ENCODE measurements at regions of chr12 and their contacts with region 1.

Region 1: GRCh38 chr12:103548622-103549601 is 38.2 kb upstream of the STAB2 start:
- DNase-seq: peak; percentile 55
- H3K4me3 ChIP-seq: peak overlapping the region in 1 of 2 experiments; percentile 36; a peak in 1 of 4 replicates
- H3K27ac ChIP-seq: no peak overlapping the region
- H3K4me1 ChIP-seq: no peaks in the 10 kb centered on the region; a peak in 1 of 4 replicates
- H3K27me3 ChIP-seq: no peaks in the 10 kb centered on the region
- CTCF ChIP-seq: peak; percentile 97
- EP300 ChIP-seq: no peak
- RAD21 ChIP-seq: peak; percentile 97

Region 2: DNA sequence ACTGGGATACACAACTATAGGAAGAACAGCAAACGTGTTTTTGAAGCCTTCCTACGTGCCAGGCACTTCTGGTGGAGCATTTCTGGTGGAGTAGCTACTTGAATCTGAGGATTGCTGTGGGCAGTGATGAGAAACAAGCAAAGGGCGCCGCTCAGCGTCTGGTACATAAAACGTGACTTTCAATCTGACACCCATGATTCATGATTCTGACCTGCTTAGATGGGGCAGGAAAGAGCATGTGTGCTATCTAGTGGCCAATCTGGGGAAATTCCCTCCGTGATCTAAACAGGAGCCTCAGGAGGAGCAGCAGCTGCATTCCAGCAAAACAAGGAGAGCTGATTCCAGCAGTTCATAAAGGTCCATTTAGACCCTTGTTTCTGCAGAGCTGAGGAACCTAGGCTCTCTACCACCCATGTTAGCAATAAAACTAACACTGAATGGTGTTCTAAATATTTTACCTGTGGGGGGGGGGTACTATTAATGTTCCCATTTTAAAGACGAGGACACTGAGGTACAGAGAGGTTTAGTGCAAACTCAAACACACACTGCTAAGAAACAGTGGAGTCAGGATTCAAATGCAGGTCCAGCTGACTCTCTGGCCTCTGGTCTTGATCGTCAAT is 669.7 kb before region 1 on chr12:
- CTCF ChIA-PET with region 1: interaction called, 116 read pairs
- POLR2A ChIA-PET with region 1: no interaction called
- DNase-seq: peak; percentile 23
- H3K4me3 ChIP-seq: peak overlapping the region in 1 of 2 experiments; percentile 47; a peak in 2 of 4 replicates
- H3K27ac ChIP-seq: no peak overlapping the region
- H3K4me1 ChIP-seq: peaks cover 0 to 2% of the 10 kb centered on the region in 2 experiments; a peak in 1 of 4 replicates
- H3K27me3 ChIP-seq: no peaks in the 10 kb centered on the region
- CTCF ChIP-seq: peak; percentile 62
- EP300 ChIP-seq: no peak
- RAD21 ChIP-seq: peak; percentile 59

Region 3: GRCh38 chr12:103326190-103326589 is 222.7 kb before region 1 on chr12:
- CTCF ChIA-PET with region 1: interaction called, 10 read pairs
- POLR2A ChIA-PET with region 1: no interaction called
- DNase-seq: peak; percentile 27
- H3K4me3 ChIP-seq: no peak overlapping the region
- H3K27ac ChIP-seq: no peak overlapping the region
- H3K4me1 ChIP-seq: no peaks in the 10 kb centered on the region
- H3K27me3 ChIP-seq: no peaks in the 10 kb centered on the region
- CTCF ChIP-seq: peak; percentile 17; the same call in 1 of the 2 replicates
- EP300 ChIP-seq: no peak
- RAD21 ChIP-seq: peak; percentile 44; the same call in 1 of the 2 replicates

Region 4: DNA sequence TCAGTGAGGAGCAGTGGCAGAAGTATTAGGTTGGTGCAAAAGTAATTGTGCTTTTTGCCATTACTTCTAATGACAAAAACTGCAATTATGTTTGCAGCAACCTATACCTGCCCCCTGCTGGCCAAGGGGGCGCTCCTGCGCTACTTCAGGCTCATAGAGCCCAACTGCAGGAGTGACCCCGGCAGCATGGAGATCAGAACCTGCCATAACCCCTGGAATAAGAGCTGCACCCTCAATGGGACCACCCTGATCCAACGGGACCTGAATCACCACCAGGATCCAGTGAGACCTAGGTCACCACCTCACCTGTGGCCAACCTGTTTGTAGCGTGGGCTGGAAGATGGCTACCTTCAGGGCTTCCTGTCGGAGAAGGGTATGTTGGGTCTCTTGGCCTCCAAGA is 44.9 kb before region 1 on chr12:
- CTCF ChIA-PET with region 1: interaction called, 22 read pairs
- POLR2A ChIA-PET with region 1: no interaction called
- DNase-seq: peak; percentile 54
- H3K4me3 ChIP-seq: peak overlapping the region in 1 of 2 experiments; percentile 26; a peak in 1 of 4 replicates
- H3K27ac ChIP-seq: no peak overlapping the region
- H3K4me1 ChIP-seq: no peaks in the 10 kb centered on the region
- H3K27me3 ChIP-seq: no peaks in the 10 kb centered on the region
- CTCF ChIP-seq: peak; percentile 39
- EP300 ChIP-seq: no peak
- RAD21 ChIP-seq: peak; percentile 65

Region 5: DNA sequence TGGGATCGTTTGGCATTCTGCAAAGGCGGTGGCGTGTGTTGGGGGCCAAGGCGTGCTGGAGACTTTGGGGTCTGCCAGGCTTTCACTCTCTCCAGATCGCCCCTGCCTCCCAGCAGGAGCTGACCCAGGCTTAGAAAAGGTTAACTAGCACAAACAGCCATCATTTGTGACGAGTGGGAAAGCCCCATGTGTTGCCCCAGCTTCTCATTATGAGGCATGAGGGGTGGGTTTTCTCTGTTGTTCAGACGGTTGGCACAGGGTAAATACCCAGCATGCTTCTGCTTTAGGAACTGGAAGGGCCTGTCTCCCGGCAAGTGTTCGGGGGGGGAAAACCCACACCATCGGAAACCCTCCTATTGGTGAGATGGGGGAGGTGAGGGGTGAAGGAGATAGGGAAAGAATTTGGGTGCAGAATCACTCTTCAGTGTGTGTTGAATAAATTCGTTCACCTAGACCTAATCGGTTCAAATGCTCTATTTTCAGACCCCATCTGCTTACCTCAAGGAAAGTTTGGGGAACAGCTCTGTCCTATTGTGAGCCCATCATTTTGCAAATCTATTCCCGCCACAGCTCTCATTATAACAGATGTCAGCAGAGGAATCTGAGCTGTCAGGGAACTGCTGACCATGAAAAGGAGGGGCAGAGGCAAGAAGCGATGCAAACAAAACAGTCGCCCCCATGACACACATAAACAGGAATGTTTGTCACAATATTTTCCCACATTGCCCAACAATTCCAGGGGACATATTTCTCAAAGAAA is 18.4 kb before region 1 on chr12:
- CTCF ChIA-PET with region 1: interaction called, 21 read pairs
- POLR2A ChIA-PET with region 1: no interaction called
- DNase-seq: no peak
- H3K4me3 ChIP-seq: no peak overlapping the region
- H3K27ac ChIP-seq: no peak overlapping the region
- H3K4me1 ChIP-seq: no peaks in the 10 kb centered on the region; a peak in 1 of 4 replicates
- H3K27me3 ChIP-seq: no peaks in the 10 kb centered on the region
- CTCF ChIP-seq: no peak
- EP300 ChIP-seq: no peak
- RAD21 ChIP-seq: no peak

Region 6: DNA sequence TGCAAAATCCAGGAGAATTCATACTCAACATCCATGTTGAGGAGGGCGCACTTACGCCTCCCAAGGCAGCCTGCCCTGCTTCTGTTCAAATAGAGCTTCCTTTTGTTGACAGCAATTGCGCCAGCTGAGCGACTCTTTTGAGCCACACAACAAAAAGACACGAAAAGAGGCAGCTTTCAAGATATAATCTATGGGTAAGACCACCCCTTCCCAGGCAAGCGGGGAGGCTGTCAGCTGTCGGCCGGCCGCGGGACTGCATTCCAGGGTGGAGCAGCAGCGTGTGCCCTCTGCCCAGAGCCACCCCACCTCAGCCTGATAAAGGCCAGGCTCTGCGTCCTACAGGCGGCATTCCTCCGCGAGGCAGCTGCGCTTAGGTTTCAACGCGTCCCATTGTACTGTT is 22.4 kb after region 1 on chr12:
- CTCF ChIA-PET with region 1: interaction called, 12 read pairs
- POLR2A ChIA-PET with region 1: no interaction called
- DNase-seq: peak; percentile 41
- H3K4me3 ChIP-seq: no peak overlapping the region
- H3K27ac ChIP-seq: no peak overlapping the region
- H3K4me1 ChIP-seq: peaks cover 0 to 7% of the 10 kb centered on the region in 2 experiments; a peak in 1 of 4 replicates
- H3K27me3 ChIP-seq: no peaks in the 10 kb centered on the region; the same call in 1 of the 2 replicates
- CTCF ChIP-seq: no peak; the same call in 1 of the 2 replicates
- EP300 ChIP-seq: no peak
- RAD21 ChIP-seq: no peak

Region 7: GRCh38 chr12:103586132-103586531 is 37.2 kb after region 1 on chr12:
- CTCF ChIA-PET with region 1: no interaction called
- POLR2A ChIA-PET with region 1: no interaction called
- DNase-seq: no peak
- H3K4me3 ChIP-seq: no peak overlapping the region
- H3K27ac ChIP-seq: no peak overlapping the region
- H3K4me1 ChIP-seq: no peaks in the 10 kb centered on the region
- H3K27me3 ChIP-seq: no peaks in the 10 kb centered on the region
- CTCF ChIP-seq: peak; percentile 18; the same call in 1 of the 2 replicates
- EP300 ChIP-seq: no peak
- RAD21 ChIP-seq: peak; percentile 19; the same call in 1 of the 2 replicates

Measured in SK-N-SH (cell line).